Activated naive CD4-positive, alpha-beta T cell treated with anti-CD3 and anti-CD28 coated beads, Interleukin-2, amount 10 ng/mL, durations not matched to agents 7 days and 5 days (primary cell): ENCODE measurements at regions of chr5 and their contacts with region 1.

Region 1: DNA sequence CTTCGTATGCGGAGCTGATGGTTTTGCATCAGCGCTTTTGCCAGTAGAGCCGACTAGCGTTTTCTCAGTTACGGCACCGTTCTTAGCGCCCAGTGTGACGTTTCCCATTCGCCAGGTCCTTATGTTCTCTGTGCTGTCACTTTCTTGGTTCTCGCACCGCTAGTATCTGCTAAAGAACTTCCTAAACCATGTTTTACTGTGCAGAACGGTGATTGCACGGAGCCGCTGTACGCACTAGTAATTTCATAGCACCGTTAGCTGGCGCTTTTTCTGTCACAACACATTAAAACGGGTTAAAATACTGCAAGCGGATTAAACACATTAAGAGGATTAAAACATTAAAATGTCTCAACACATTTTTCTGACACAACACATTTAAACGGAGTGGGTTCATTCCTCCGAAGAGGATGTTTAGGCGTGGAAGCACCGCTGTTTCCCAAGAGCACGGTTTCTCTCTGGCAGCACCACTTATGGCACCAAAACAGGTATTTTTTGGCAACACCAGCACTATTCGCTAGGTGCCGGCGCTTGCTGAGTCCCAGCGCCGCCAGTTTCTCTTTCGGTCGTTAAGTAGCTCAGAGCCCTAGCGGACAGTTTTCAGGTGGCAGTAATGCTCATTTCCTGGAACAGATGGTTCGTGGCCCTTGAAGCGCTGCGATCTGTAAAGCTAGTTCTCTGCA is 20.4 kb downstream of the ANXA2R start:
- DNase-seq: peak; percentile 92
- H3K4me3 Mint-ChIP-seq: peak overlapping the region; percentile 95
- H3K27ac Mint-ChIP-seq: peak overlapping the region; percentile 100
- H3K4me1 Mint-ChIP-seq: peaks cover 40% of the 10 kb centered on the region
- H3K27me3 Mint-ChIP-seq: no peaks in the 10 kb centered on the region

Region 2: DNA sequence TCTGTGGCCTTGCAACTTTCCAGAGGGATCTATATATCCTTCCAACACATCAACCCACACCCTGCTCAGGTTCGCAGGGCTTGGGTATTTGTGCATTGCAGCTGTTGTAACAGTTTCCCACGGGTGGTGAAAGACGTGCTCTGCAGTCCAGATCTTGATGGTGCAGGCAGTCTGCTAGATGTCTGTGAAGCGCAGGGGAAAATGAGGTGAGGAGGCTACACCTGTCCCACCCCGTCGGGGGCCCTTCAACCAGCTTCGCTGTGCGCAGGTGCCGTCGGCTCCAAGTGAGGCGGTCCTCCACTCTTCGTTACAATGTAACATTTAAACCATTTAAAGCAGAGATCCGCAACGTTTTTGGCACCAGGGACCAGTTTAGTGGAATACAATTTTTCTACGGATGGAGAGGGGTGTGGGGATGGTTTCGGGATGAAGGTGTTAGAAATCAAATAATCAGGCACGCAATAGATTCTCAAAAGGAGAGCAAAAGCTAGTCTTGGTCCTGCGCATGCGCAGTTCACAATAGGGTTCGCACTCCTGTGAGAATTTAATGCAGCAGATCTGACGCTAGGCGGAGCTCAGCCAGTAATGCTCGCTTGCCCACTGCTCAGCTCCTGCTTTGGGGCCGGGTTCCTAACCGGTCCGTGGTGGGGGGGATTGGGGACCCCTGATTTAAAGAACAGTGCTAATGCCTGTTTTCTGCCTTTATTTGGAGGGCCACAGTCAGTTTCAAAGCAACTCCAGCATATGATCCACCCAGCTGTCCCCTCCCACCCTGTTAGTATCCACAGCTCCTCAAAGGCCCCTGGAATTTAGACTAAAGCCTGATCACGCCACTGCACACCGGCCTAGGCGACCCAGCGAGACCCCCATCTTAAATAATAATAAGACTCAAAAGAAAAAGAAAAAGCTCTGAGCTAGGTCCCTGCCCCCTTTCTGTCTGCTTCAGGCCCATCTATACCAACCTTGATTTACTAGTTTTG is 111.0 kb before region 1 on chr5:
- CTCF ChIA-PET with region 1: interaction called, 14 read pairs
- DNase-seq: peak; percentile 94
- H3K4me3 Mint-ChIP-seq: peak overlapping the region; percentile 81
- H3K27ac Mint-ChIP-seq: peak overlapping the region; percentile 46
- H3K4me1 Mint-ChIP-seq: peaks cover 21% of the 10 kb centered on the region
- H3K27me3 Mint-ChIP-seq: peaks cover 45% of the 10 kb centered on the region

Region 3: DNA sequence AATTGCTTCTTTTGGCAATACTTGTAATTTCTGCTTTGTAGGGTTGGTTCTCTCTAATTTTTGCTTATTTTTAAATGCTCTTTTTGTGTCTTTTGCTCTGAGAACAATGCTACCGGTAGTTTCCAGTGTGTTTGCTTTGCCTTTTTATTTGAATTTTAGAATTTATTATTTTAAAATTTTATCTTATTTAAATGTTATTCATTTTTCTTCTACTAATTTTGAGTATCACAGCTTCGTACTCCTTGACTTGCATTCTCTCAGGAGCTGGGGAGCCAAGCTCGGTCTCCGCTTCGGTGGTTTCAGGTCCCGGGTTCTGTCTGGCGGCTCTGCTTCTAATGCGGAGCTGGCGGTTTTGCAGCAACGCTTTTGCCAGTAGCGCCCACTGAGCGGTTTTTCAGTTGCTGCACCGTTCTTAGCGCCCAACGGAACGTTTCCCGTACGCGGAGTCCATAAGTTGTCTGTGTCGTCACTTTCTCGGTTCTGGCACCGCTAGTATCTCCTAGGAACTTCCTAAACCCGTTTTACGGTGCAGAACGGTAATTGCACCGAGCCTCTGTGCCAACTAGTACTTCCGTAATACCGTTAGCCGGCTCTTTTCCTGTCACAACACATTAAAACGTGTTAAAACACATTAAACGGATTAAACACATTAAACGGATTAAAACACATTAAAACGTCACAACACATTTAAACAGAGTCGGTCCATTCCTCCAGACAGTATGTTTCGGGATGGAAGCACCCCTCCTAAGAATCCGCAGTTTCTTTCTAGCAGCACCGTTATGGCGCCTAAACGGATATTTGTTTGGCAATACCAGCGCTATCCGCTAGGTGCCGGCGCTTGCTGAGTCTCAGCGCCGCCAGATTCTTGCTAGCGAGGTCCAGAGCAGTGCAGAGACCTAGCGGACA is 25.3 kb before region 1 on chr5:
- CTCF ChIA-PET with region 1: interaction called, 74 read pairs
- DNase-seq: peak; percentile 91
- H3K4me3 Mint-ChIP-seq: peak overlapping the region; percentile 97
- H3K27ac Mint-ChIP-seq: peak overlapping the region; percentile 99
- H3K4me1 Mint-ChIP-seq: peaks cover 27% of the 10 kb centered on the region
- H3K27me3 Mint-ChIP-seq: peaks cover 9% of the 10 kb centered on the region

Region 4: GRCh38 chr5:43034591-43034968 is 14.8 kb after region 1 on chr5:
- CTCF ChIA-PET with region 1: interaction called, 47 read pairs
- DNase-seq: peak; percentile 30
- H3K4me3 Mint-ChIP-seq: peak overlapping the region; percentile 2
- H3K27ac Mint-ChIP-seq: peak overlapping the region; percentile 12
- H3K4me1 Mint-ChIP-seq: peaks cover 41% of the 10 kb centered on the region
- H3K27me3 Mint-ChIP-seq: no peaks in the 10 kb centered on the region

Region 5: DNA sequence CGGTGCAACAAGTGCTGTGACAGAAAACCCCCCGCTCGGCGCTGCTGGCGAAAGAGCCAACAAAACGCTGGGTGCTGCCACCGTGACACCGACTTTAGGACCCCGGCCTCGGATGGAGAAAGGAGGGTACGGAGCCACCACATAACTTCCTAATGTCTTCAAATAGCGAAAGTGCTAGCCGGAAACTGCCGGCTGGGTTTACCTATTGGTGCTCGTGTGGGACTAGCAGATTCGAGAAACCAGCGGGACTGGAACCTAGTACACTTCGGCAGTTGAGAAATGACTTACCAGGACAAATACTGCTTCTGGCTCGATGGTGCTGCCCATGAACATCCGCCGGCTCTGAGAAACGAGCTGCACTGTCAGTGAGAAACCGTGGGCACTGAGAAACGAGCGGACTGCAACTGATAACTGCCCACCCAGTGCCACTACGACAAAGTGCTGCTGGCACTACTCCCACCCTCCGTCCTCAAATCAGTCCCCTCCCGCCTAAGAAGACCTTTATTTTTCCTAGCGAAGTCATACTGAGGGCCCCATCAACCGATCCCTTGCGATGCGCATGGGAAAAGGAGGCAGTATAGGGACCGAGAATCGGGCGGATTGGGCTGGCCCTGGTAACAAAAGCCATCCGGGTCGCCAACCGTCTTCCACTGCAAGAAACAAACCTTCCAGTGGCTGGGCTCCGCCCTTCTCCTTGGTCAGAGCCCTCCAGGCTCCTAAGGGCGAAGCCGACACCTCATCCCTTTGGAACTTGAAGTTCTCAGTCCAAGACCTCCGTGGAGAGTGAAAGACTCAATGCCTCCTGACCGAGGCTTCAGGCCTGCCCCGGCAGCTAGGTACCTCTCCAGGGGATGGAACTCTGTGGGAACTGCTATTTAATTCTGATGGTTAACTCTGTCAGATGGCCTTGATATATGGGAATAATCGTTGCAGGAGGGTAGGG is 47.3 kb after region 1 on chr5:
- CTCF ChIA-PET with region 1: interaction called, 10 read pairs
- DNase-seq: peak; percentile 90
- H3K4me3 Mint-ChIP-seq: peak overlapping the region; percentile 97
- H3K27ac Mint-ChIP-seq: peak overlapping the region; percentile 100
- H3K4me1 Mint-ChIP-seq: peaks cover 53% of the 10 kb centered on the region
- H3K27me3 Mint-ChIP-seq: peaks cover 4% of the 10 kb centered on the region